ENCODE measurements at regions of chr3 and their contacts with region 1.

Region 1: GRCh38 chr3:113745273-113746068 is 578 bp downstream of the NAA50 start:
- DNase-seq: peak; percentile 59 to 89 (median 83)
- ATAC-seq: peak; percentile 81
- H3K4me3 ChIP-seq: peak overlapping the region; percentile 90
- H3K4me3 Mint-ChIP-seq: peak overlapping the region; percentile 92 to 100 (median 96)
- H3K27ac ChIP-seq: peak overlapping the region; percentile 99
- H3K27ac Mint-ChIP-seq: peak overlapping the region; percentile 96 to 100 (median 100)
- H3K4me1 ChIP-seq: peaks cover 25 to 43% of the 10 kb centered on the region in 2 donors
- H3K4me1 Mint-ChIP-seq: peaks cover 47 to 81% (median 72%) of the 10 kb centered on the region in 7 donors
- H3K27me3 ChIP-seq: no peaks in the 10 kb centered on the region
- H3K27me3 Mint-ChIP-seq: no peaks in the 10 kb centered on the region

Region 2: GRCh38 chr3:112128843-112129727 is 1616.4 kb before region 1 on chr3:
- CTCF ChIA-PET with region 1: no interaction called
- POLR2A ChIA-PET with region 1: no interaction called
- intact Hi-C with region 1: loop called in 1 of 2 experiments (anchors 5 kb)
- DNase-seq: peak in 8 of 9 donors; percentile 39 to 88 (median 83)
- ATAC-seq: peak; percentile 82
- H3K4me3 ChIP-seq: no peak overlapping the region
- H3K4me3 Mint-ChIP-seq: peak overlapping the region; percentile 23 to 100 (median 64)
- H3K27ac ChIP-seq: peak overlapping the region; percentile 82
- H3K27ac Mint-ChIP-seq: peak overlapping the region; percentile 87 to 95 (median 93)
- H3K4me1 ChIP-seq: peaks cover 41 to 72% of the 10 kb centered on the region in 2 donors
- H3K4me1 Mint-ChIP-seq: peaks cover 49 to 92% (median 90%) of the 10 kb centered on the region in 7 donors
- H3K27me3 ChIP-seq: no peaks in the 10 kb centered on the region
- H3K27me3 Mint-ChIP-seq: no peaks in the 10 kb centered on the region

Region 3: DNA sequence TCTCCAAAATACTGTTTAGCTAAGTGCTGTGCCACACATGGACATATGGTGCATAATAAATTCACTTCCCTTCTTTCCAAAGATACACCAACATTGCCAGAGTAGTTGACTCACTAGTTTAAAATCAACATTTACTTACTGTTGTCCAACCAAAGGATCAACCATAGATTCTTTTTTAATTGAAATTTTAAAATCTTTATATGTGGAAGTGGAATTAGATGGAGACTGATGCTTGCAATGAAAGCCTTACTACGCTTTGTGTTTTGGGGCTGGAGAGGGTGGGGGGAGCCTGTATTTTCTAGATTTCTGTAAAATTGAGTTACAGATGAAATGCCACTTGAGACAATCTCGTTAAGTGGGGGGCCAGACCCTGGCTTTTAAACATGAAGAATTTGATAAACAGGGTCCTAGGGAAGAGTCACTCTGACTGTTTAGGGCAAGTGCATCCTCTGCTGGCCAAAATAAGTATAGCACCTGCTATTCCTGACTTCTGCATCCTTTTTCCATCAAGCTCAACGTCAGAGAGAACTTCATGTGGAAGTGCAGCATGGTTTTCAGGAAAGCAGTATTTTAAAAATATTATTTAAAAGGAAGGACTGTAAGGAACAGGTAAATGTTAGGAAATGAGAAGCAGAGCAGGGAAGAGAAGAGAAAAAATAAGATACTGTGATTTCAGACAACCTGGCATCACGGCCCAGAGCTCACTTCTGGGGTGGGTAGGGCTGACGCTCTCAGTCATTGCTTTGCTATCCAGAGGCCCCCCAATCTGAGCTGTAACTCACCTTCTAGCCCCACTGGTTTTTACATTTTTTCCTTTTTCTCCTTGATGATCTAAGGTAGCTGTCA is 457.4 kb before region 1 on chr3:
- CTCF ChIA-PET with region 1: no interaction called
- POLR2A ChIA-PET with region 1: no interaction called
- intact Hi-C with region 1: loop called in 1 of 2 experiments (anchors 1 kb)
- DNase-seq: peak in 6 of 9 donors; percentile 9 to 57 (median 40)
- ATAC-seq: peak; percentile 60
- H3K4me3 ChIP-seq: no peak overlapping the region
- H3K4me3 Mint-ChIP-seq: no peak overlapping the region
- H3K27ac ChIP-seq: no peak overlapping the region
- H3K27ac Mint-ChIP-seq: no peak overlapping the region
- H3K4me1 ChIP-seq: no peaks in the 10 kb centered on the region
- H3K4me1 Mint-ChIP-seq: peaks cover 0 to 4% (median 0%) of the 10 kb centered on the region in 7 donors
- H3K27me3 ChIP-seq: no peaks in the 10 kb centered on the region
- H3K27me3 Mint-ChIP-seq: no peaks in the 10 kb centered on the region

Region 4: GRCh38 chr3:113575206-113575605 is 170.3 kb before region 1 on chr3:
- CTCF ChIA-PET with region 1: interaction called, 6 read pairs
- POLR2A ChIA-PET with region 1: no interaction called
- intact Hi-C with region 1: loop called (anchors 1 to 2 kb)
- DNase-seq: no peak
- ATAC-seq: no peak
- H3K4me3 ChIP-seq: no peak overlapping the region
- H3K4me3 Mint-ChIP-seq: no peak overlapping the region
- H3K27ac ChIP-seq: no peak overlapping the region
- H3K27ac Mint-ChIP-seq: peak overlapping the region in 8 of 9 donors; percentile 10 to 79 (median 66)
- H3K4me1 ChIP-seq: no peaks in the 10 kb centered on the region
- H3K4me1 Mint-ChIP-seq: peaks cover 3 to 21% (median 13%) of the 10 kb centered on the region in 7 donors
- H3K27me3 ChIP-seq: no peaks in the 10 kb centered on the region
- H3K27me3 Mint-ChIP-seq: no peaks in the 10 kb centered on the region

Region 5: DNA sequence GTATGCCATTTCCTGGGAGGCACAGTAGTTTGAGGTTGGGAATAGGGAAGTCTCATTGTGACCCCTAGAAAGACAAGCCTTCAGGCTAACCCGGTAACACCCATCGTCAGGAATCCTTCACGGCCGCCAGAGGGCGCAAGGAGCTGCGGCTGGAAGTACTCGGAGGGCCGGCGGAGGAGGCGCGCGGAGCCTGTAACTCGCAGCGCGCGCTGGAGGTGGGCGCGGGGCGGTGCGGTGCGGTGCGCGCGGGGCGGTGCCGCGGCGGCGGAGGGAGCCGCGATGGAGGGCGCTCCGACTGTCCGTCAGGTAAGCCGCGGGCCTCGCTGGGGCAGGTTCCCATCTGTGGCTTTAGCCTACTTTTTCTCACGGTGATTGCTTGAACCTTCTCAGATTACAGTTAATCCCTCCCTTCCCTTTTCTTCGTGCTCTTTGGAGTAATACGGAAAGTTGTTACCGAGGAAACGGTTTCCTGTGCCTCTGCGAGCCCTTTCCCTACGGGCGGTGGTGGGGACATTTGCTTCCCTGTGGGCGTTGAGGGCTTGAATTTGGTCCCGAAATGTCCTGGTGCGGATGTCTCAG is 93.2 kb after region 1 on chr3 and contains the start of gene GRAMD1C:
- CTCF ChIA-PET with region 1: interaction called, 5 read pairs
- POLR2A ChIA-PET with region 1: no interaction called
- intact Hi-C with region 1: loop called (anchors 1 to 2 kb)
- DNase-seq: peak; percentile 70 to 86 (median 83)
- ATAC-seq: peak; percentile 100
- H3K4me3 ChIP-seq: peak within 1 kb of the TSS; percentile 72
- H3K4me3 Mint-ChIP-seq: peak within 1 kb of the TSS; percentile 72 to 85 (median 80)
- H3K27ac ChIP-seq: no peak within 1 kb of the TSS
- H3K27ac Mint-ChIP-seq: peak within 1 kb of the TSS in 5 of 9 donors; percentile 2 to 41 (median 17)
- H3K4me1 ChIP-seq: no peaks in the 10 kb centered on the region
- H3K4me1 Mint-ChIP-seq: peaks cover 0 to 11% (median 5%) of the 10 kb centered on the region in 7 donors
- H3K27me3 ChIP-seq: no peaks in the 10 kb centered on the region
- H3K27me3 Mint-ChIP-seq: peaks cover 0 to 7% (median 4%) of the 10 kb centered on the region in 5 donors
- total RNA-seq, gene GRAMD1C: 0.22 to 0.54 (median 0.28) TPM in 4 of 5 experiments, not detected in the other

Region 6: GRCh38 chr3:114213627-114214541 is 468.4 kb after region 1 on chr3:
- CTCF ChIA-PET with region 1: no interaction called
- POLR2A ChIA-PET with region 1: interaction called, 12 read pairs
- intact Hi-C with region 1: loop called (anchors 2 kb)
- DNase-seq: peak; percentile 33 to 83 (median 71)
- ATAC-seq: peak; percentile 61
- H3K4me3 ChIP-seq: peak overlapping the region; percentile 50
- H3K4me3 Mint-ChIP-seq: no peak overlapping the region
- H3K27ac ChIP-seq: peak overlapping the region; percentile 90
- H3K27ac Mint-ChIP-seq: no peak overlapping the region
- H3K4me1 ChIP-seq: peaks cover 43 to 65% of the 10 kb centered on the region in 2 donors
- H3K4me1 Mint-ChIP-seq: peaks cover 0 to 26% (median 3%) of the 10 kb centered on the region in 7 donors
- H3K27me3 ChIP-seq: no peaks in the 10 kb centered on the region
- H3K27me3 Mint-ChIP-seq: no peaks in the 10 kb centered on the region